ENCODE measurements at regions of chr5 and their contacts with region 1.

Region 1: DNA sequence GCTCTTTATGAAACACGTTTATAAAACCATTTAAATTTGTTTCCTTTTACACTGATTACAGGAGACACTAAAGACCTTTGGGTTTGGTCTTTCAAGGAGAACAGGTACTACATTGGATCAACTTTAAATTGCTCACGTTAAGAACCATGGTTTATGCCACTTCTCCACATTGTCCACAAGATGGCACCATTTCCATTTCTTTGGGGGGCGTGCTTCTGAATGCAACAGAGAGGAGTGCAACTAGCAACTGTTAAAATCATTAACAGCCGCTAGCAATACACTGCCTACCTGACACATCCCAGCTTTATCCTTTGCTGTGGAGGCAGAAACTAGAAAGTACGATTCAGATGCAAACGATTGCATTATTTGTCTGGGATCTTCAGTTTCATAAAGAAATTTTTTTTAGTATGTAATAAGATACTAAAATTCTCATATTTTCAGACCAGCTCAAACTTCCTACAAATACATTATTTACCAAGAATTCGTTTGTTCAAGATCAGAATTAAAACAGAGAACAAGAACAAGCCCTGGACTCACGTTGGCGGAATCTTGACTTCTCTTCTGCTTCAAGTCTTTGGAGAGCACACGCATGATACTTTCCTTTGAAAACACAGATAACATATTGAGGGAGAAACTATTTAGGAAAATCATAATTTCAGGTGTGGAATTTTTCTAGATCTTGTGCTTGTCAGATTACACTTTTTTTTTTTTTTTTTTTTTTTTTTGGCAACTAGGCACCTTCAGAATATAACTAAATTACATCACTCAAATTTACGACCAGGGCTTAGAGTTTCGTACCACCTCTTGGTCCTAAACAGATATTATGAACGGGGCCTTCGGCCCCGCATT is 702 bp downstream of the CDC20B start:
- DNase-seq: peak; percentile 48 to 76
- H3K4me3 ChIP-seq: peak overlapping the region; percentile 54
- H3K27ac ChIP-seq: no peak overlapping the region
- H3K4me1 ChIP-seq: peaks cover 20% of the 10 kb centered on the region
- H3K27me3 ChIP-seq: no peaks in the 10 kb centered on the region
- CTCF ChIP-seq: peak; percentile 90

Region 2: DNA sequence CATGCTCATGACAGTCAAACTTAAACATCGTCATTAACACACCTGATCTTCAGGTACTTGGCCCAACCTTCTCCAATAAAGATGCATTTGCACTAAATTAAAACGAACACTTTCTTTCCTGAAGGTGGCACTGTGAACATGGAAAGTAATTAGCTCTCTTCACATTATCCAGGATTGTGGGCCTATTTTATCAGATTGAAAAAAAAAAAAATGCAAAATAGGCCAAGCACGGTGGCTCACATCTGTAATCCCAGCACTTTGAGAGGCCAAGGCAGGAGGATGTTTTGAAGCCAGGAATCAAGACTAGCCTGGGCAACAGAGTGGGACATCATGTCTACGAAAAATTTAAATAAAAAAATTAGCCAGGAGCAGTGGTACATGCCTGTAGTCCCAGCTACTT is 15.1 kb after region 1 on chr5:
- CTCF ChIA-PET with region 1: no interaction called
- POLR2A ChIA-PET with region 1: interaction called, 10 read pairs
- intact Hi-C with region 1: no loop called
- DNase-seq: peak in 1 of 2 experiments; percentile 54
- H3K4me3 ChIP-seq: no peak overlapping the region
- H3K27ac ChIP-seq: no peak overlapping the region
- H3K4me1 ChIP-seq: peaks cover 46% of the 10 kb centered on the region
- H3K27me3 ChIP-seq: no peaks in the 10 kb centered on the region
- CTCF ChIP-seq: peak; percentile 68

Region 3: GRCh38 chr5:55307383-55308253 is 135.3 kb after region 1 on chr5 and contains the starts of genes DHX29 and MTREX:
- CTCF ChIA-PET with region 1: interaction called, 8 read pairs
- POLR2A ChIA-PET with region 1: no interaction called
- intact Hi-C with region 1: loop called (anchors 2 kb)
- DNase-seq: peak; percentile 82 to 88
- H3K4me3 ChIP-seq: peak within 1 kb of the TSS; percentile 96
- H3K27ac ChIP-seq: peak within 1 kb of the TSS; percentile 85
- H3K4me1 ChIP-seq: peaks cover 40% of the 10 kb centered on the region
- H3K27me3 ChIP-seq: no peaks in the 10 kb centered on the region
- CTCF ChIP-seq: no peak
- total RNA-seq, gene DHX29: 11.1 and 16.5 TPM in 2 replicates
- total RNA-seq, gene MTREX: 51.7 and 56.7 TPM in 2 replicates

Region 4: GRCh38 chr5:55407059-55407684 is 234.9 kb after region 1 on chr5:
- CTCF ChIA-PET with region 1: interaction called, 3 read pairs
- POLR2A ChIA-PET with region 1: no interaction called
- intact Hi-C with region 1: loop called (anchors 10 kb)
- DNase-seq: peak in 1 of 2 experiments; percentile 14
- H3K4me3 ChIP-seq: no peak overlapping the region
- H3K27ac ChIP-seq: no peak overlapping the region
- H3K4me1 ChIP-seq: 0 out of 2 replicates have a peak, but pooled peaks cover 6% of the 10 kb centered on the region
- H3K27me3 ChIP-seq: no peaks in the 10 kb centered on the region
- CTCF ChIP-seq: peak; percentile 71

Region 5: DNA sequence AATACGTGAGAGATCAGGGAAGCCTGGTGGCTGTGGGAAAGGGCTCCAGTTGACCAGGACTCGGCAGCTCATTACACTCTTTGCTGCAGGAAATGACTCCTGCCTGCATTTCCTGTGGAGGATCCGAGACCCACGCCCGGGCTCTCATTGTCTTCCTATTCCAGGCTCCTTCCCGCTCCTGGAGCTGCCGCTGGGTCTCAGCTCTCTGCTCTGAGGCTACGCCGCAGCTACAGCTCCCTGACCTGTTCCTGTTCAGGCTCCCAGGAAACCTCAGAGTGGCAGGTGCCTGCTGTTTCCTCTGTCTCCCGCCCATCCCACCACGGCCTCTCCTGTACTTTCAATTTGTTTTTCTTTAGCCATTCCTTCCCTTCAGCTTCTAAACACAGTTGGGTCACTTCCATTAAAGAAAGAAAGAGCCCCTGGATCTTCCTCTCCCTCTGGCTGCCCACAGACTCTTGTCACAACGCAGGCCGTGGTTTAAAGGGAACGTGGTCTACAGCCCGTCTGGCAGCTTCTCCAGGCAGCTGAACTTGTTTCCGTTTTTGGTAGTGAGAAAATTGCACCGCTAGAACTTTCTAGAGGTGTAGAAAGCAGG is 751.0 kb after region 1 on chr5:
- CTCF ChIA-PET with region 1: no interaction called
- POLR2A ChIA-PET with region 1: no interaction called
- intact Hi-C with region 1: loop called (anchors 5 kb)
- DNase-seq: peak in 1 of 2 experiments; percentile 29
- H3K4me3 ChIP-seq: no peak overlapping the region
- H3K27ac ChIP-seq: no peak overlapping the region
- H3K4me1 ChIP-seq: no peaks in the 10 kb centered on the region
- H3K27me3 ChIP-seq: no peaks in the 10 kb centered on the region
- CTCF ChIP-seq: no peak

Measured in PC-9 (cell line).